Esophagus muscularis mucosa (tissue), 4 donors: ENCODE measurements at regions of chr1 and their contacts with region 1.

Region 1: GRCh38 chr1:16181887-16182719 is 26.2 kb upstream of the EPHA2 start:
- DNase-seq: peak; percentile 96
- H3K4me3 ChIP-seq: peak overlapping the region in 3 of 4 donors; percentile 8 to 28 (median 10)
- H3K27ac ChIP-seq: peak overlapping the region; percentile 82 to 91 (median 89)
- H3K4me1 ChIP-seq: peaks cover 26 to 63% (median 52%) of the 10 kb centered on the region in 4 donors
- H3K27me3 ChIP-seq: no peaks in the 10 kb centered on the region
- CTCF ChIP-seq: no peak
- EP300 ChIP-seq: no peak
- POLR2A ChIP-seq: no peak

Region 2: GRCh38 chr1:16143566-16144324 is 38.4 kb before region 1 on chr1:
- intact Hi-C with region 1: loop called (anchors 5 kb)
- DNase-seq: no peak
- H3K4me3 ChIP-seq: no peak overlapping the region
- H3K27ac ChIP-seq: peak overlapping the region; percentile 69 to 83 (median 80)
- H3K4me1 ChIP-seq: peaks cover 69 to 95% (median 80%) of the 10 kb centered on the region in 4 donors
- H3K27me3 ChIP-seq: no peaks in the 10 kb centered on the region
- CTCF ChIP-seq: no peak
- EP300 ChIP-seq: no peak
- POLR2A ChIP-seq: no peak